ENCODE measurements at regions of chr17 and their contacts with region 1.

Region 1: DNA sequence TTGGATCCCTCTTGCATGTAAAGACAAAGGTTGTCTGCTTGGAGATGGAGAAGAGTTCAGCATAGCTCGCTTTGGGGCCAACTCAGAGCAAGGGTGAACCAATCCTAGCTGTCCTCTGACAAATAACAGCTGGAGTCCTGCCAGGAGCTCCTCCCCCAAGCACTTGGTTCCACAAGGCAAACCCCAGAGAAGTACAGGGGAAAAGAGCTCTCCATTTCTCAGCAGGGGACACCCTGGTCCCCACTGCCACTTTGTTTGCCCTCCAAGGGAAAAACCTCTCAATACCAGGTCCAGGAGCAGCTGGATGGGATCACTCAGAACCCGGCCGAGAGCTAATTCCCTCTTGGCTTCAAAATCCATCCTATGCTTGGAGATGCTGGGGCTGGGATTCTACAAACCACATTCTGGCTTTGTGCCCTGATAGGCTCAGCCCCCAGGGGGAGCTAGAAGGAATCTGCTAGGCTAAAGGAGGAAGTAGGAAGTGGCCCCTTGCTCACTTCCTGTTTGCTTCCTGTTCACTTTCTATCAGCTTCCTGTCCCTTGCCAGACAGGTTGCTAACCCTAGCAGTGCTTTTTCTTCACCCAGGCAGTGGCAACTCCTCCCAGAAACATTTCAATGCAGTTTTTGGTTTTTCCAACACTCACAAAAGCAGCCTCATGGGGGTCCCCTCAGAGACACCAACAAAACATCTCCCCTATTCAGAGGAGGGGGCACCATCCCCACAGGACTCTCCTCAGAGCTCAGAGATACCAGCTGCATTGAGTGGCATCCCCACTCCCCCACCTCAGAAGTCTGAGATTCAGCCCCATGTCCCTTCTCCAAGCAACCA is 30.7 kb downstream of the CDRT4 start:
- DNase-seq: peak; percentile 59
- ATAC-seq: peak; percentile 77
- H3K4me3 Mint-ChIP-seq: no peak overlapping the region
- H3K27ac Mint-ChIP-seq: no peak overlapping the region
- H3K4me1 Mint-ChIP-seq: peaks cover 6% of the 10 kb centered on the region; the same call in 1 of the 2 replicates
- H3K27me3 Mint-ChIP-seq: no peaks in the 10 kb centered on the region
- CTCF ChIP-seq: peak; percentile 28; the same call in 1 of the 2 replicates

Region 2: GRCh38 chr17:15233022-15233805 is 203.5 kb before region 1 on chr17:
- CTCF ChIA-PET with region 1: interaction called, 10 read pairs
- POLR2A ChIA-PET with region 1: no interaction called
- DNase-seq: peak; percentile 27
- ATAC-seq: peak; percentile 82
- H3K4me3 Mint-ChIP-seq: no peak overlapping the region
- H3K27ac Mint-ChIP-seq: no peak overlapping the region
- H3K4me1 Mint-ChIP-seq: peaks cover 5% of the 10 kb centered on the region
- H3K27me3 Mint-ChIP-seq: no peaks in the 10 kb centered on the region
- CTCF ChIP-seq: no peak

Region 3: DNA sequence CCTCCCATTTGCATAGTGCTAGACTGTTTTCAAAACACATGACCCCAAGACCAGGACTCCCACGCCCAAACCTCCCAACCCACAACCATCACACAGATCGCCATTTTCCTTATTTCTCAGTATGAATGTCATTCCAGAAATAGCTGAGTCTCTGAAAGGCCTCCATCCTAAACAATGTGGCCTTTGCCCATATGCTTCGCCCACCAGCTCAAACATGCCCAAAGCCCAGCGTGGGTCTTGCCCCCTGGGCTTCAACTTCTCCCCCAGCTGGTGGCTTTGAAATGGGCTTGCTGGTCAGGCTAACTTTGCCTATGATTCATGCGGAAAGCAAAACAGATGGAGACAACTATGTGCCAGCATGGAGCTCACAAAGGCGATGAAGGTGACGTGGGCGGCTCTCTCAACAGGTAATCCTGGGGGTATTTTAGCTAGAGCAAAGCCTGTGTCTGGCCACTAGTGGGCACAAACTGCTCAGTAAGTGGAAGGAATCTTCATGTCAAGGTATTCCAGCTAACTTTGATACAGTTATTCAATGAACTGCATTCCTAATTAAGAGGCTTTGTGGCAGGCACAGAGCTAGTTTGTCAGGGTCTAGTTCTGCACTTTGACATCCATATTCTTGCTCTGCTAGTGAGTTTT is 188.7 kb before region 1 on chr17:
- CTCF ChIA-PET with region 1: interaction called, 11 read pairs
- POLR2A ChIA-PET with region 1: no interaction called
- DNase-seq: peak; percentile 24
- ATAC-seq: peak; percentile 71
- H3K4me3 Mint-ChIP-seq: no peak overlapping the region
- H3K27ac Mint-ChIP-seq: no peak overlapping the region
- H3K4me1 Mint-ChIP-seq: peaks cover 14% of the 10 kb centered on the region
- H3K27me3 Mint-ChIP-seq: no peaks in the 10 kb centered on the region
- CTCF ChIP-seq: no peak

Region 4: DNA sequence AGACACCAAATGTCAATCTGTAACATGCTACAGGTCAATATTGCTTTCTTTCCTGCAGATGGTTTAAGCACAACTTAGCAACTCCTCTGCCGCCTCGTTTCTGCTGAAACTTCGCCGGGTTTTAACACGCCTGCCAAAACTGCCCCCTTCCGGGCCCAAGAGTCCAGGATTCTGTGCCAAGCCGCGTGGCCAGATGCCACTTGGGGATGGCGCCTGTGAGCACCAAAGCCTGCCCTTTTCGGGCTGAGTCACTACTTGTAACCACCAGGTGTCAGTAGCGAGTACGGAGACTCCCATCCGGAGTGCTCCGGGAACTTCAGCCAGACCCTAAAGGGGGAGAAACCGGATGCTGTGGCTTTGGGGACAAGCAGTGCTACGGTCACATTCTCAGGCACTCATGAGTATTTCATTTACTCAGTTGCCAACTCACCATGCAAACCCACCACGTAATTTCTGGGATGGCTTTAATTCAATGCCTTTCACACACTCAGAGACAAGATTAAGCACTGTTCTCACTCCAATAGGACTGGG is 179.4 kb before region 1 on chr17:
- CTCF ChIA-PET with region 1: interaction called, 18 read pairs
- POLR2A ChIA-PET with region 1: no interaction called
- DNase-seq: peak; percentile 78
- ATAC-seq: peak; percentile 15
- H3K4me3 Mint-ChIP-seq: peak overlapping the region; percentile 24; the same call in 1 of the 2 replicates
- H3K27ac Mint-ChIP-seq: no peak overlapping the region
- H3K4me1 Mint-ChIP-seq: peaks cover 24% of the 10 kb centered on the region
- H3K27me3 Mint-ChIP-seq: peaks cover 64% of the 10 kb centered on the region
- CTCF ChIP-seq: peak; percentile 79

Region 5: DNA sequence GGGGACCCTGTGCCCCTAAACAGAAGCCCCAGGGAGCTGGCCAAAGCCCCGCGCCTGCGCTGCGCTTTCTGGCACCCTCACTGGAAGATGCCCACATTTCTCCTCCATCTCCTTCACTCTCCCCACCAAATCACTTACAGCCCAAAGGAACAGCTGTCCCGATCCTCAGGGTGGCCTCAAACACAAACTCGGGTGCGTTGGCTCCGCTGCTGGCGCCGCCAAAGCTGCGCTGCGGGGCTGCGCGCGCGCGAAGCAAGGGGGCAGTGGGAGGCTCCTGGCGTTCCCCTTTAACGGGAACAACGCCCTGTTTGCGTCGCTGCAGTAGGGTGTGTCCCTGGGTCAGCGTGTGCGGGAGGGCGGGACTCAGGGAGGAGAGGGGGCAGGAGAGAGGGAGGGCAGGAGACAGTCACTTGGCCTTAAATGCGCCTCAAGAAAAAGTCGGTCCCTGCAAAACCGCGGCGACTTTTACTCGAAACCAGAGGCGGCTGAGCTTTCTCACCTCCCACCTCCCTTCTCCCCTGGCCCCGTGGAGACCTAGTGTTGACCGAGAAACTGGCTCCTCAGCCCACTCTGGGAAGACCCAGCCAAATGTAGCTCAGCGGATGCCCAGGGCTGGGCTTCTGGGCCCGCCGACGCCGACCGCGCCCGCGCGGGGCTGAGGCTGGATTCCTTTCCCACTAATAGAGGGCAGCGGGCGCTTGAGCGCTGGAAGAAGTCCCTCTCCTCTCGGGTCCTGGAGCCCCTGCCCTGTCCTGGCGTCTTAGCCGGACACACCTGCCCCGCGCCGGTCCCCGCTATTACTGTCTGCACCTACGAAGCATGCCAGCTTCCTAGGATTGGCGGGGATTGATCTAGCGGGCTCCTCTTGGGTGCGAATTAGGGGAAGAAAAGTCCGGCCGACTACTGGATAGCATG is 174.1 kb before region 1 on chr17:
- CTCF ChIA-PET with region 1: interaction called, 18 read pairs
- POLR2A ChIA-PET with region 1: interaction called, 3 read pairs
- DNase-seq: peak; percentile 57
- ATAC-seq: peak; percentile 38
- H3K4me3 Mint-ChIP-seq: peak overlapping the region; percentile 86
- H3K27ac Mint-ChIP-seq: no peak overlapping the region
- H3K4me1 Mint-ChIP-seq: peaks cover 20% of the 10 kb centered on the region
- H3K27me3 Mint-ChIP-seq: peaks cover 90% of the 10 kb centered on the region
- CTCF ChIP-seq: no peak

Region 6: GRCh38 chr17:15298176-15298575 is 138.5 kb before region 1 on chr17:
- CTCF ChIA-PET with region 1: no interaction called
- POLR2A ChIA-PET with region 1: no interaction called
- DNase-seq: no peak
- ATAC-seq: no peak
- H3K4me3 Mint-ChIP-seq: no peak overlapping the region
- H3K27ac Mint-ChIP-seq: no peak overlapping the region
- H3K4me1 Mint-ChIP-seq: no peaks in the 10 kb centered on the region
- H3K27me3 Mint-ChIP-seq: no peaks in the 10 kb centered on the region
- CTCF ChIP-seq: no peak